HEK293T (cell line): ENCODE measurements at regions of chrX and their contacts with region 1.

Region 1: GRCh38 chrX:19904778-19905367 is 17.5 kb upstream of the SH3KBP1 start:
- DNase-seq: peak; percentile 68

Region 2: GRCh38 chrX:19824603-19825002 is 80.3 kb before region 1 on chrX:
- CTCF ChIA-PET with region 1: no interaction called
- POLR2A ChIA-PET with region 1: no interaction called
- DNase-seq: no peak

Region 3: DNA sequence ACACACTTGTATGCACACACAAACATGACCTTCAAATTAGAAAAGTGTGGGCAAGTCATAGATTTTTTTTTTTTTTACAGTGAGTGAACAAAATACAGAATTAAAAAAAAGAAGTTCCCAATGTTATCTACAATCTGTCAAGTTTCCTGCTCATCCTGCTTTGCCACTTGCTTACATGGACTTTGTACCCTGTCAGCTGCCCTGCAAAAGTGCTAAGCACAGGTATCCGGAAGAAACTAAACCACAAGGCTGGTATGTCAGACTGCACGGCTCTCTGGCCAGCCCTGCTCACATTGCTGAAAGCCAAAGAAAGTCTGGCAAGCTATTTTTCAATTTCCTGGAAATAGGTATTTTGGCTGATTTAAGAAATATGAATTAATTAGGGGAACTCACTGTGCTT is 124.9 kb after region 1 on chrX:
- CTCF ChIA-PET with region 1: no interaction called
- POLR2A ChIA-PET with region 1: no interaction called
- DNase-seq: no peak

Region 4: GRCh38 chrX:20066968-20067708 is 162.3 kb after region 1 on chrX:
- CTCF ChIA-PET with region 1: interaction called, 17 read pairs
- POLR2A ChIA-PET with region 1: no interaction called
- DNase-seq: peak; percentile 58